ENCODE measurements at regions of chr2 and their contacts with region 1.

Region 1: GRCh38 chr2:113922784-113923183 is 32.9 kb downstream of the ACTR3 start:
- DNase-seq: no peak
- ATAC-seq: no peak
- H3K4me3 ChIP-seq: no peak overlapping the region
- H3K4me3 Mint-ChIP-seq: no peak overlapping the region
- H3K27ac ChIP-seq: no peak overlapping the region
- H3K27ac Mint-ChIP-seq: no peak overlapping the region
- H3K4me1 ChIP-seq: peaks cover 0 to 8% of the 10 kb centered on the region in 2 donors
- H3K4me1 Mint-ChIP-seq: peaks cover 17 to 36% (median 29%) of the 10 kb centered on the region in 7 donors
- H3K27me3 ChIP-seq: no peaks in the 10 kb centered on the region
- H3K27me3 Mint-ChIP-seq: no peaks in the 10 kb centered on the region

Region 2: GRCh38 chr2:113876503-113877387 is 46.0 kb before region 1 on chr2:
- CTCF ChIA-PET with region 1: no interaction called
- POLR2A ChIA-PET with region 1: interaction called, 3 read pairs
- intact Hi-C with region 1: loop called in 1 of 2 experiments (anchors 2 kb)
- DNase-seq: peak; percentile 31 to 93 (median 85)
- ATAC-seq: peak; percentile 90
- H3K4me3 ChIP-seq: no peak overlapping the region
- H3K4me3 Mint-ChIP-seq: peak overlapping the region; percentile 55 to 84 (median 72)
- H3K27ac ChIP-seq: peak overlapping the region; percentile 73
- H3K27ac Mint-ChIP-seq: peak overlapping the region; percentile 83 to 96 (median 92)
- H3K4me1 ChIP-seq: peaks cover 4 to 23% of the 10 kb centered on the region in 2 donors
- H3K4me1 Mint-ChIP-seq: peaks cover 38 to 69% (median 64%) of the 10 kb centered on the region in 7 donors
- H3K27me3 ChIP-seq: no peaks in the 10 kb centered on the region
- H3K27me3 Mint-ChIP-seq: no peaks in the 10 kb centered on the region

Region 3: DNA sequence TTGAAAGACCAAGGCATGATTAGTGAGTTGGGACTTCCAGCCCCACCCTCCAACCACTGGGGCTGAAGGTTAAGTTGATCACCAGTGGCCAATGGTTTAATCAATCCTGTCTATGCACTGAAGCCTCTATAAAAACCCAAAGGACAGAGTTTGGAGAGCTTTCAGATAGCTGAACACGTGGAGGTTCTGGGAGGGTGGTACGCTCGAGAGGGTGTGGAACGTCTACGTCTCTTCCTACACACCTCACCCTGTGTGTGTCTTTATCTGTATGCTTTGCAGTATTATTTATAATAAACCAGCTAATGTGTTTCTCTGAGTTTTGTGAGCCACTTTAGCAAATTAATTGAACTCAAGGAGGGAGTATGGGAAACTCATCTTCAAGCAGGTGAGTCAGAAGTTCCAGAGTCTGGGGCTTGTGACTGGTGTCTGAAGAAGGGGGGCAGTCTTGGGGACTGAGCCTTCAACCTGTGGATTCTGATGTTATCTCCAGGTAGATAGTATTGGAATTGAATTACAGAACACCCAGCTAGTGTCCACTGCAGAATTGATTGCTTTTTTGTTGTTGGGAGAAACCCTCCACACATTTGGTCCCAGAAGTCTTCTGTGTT is 12.6 kb before region 1 on chr2:
- CTCF ChIA-PET with region 1: no interaction called
- POLR2A ChIA-PET with region 1: no interaction called
- intact Hi-C with region 1: loop called (anchors 2 kb)
- DNase-seq: peak in 1 of 9 donors; percentile 78
- ATAC-seq: peak; percentile 46
- H3K4me3 ChIP-seq: no peak overlapping the region
- H3K4me3 Mint-ChIP-seq: peak overlapping the region; percentile 3 to 91 (median 65)
- H3K27ac ChIP-seq: peak overlapping the region; percentile 36
- H3K27ac Mint-ChIP-seq: peak overlapping the region in 8 of 9 donors; percentile 12 to 90 (median 80)
- H3K4me1 ChIP-seq: peaks cover 35 to 39% of the 10 kb centered on the region in 2 donors
- H3K4me1 Mint-ChIP-seq: peaks cover 40 to 95% (median 82%) of the 10 kb centered on the region in 7 donors
- H3K27me3 ChIP-seq: no peaks in the 10 kb centered on the region
- H3K27me3 Mint-ChIP-seq: no peaks in the 10 kb centered on the region

Region 4: GRCh38 chr2:113940891-113941290 is 18.1 kb after region 1 on chr2:
- CTCF ChIA-PET with region 1: no interaction called
- POLR2A ChIA-PET with region 1: no interaction called
- intact Hi-C with region 1: loop called in 1 of 2 experiments (anchors 2 kb)
- DNase-seq: no peak
- ATAC-seq: no peak
- H3K4me3 ChIP-seq: no peak overlapping the region
- H3K4me3 Mint-ChIP-seq: no peak overlapping the region
- H3K27ac ChIP-seq: no peak overlapping the region
- H3K27ac Mint-ChIP-seq: peak overlapping the region in 1 of 9 donors; percentile 16
- H3K4me1 ChIP-seq: no peaks in the 10 kb centered on the region
- H3K4me1 Mint-ChIP-seq: peaks cover 0 to 22% (median 10%) of the 10 kb centered on the region in 7 donors
- H3K27me3 ChIP-seq: no peaks in the 10 kb centered on the region
- H3K27me3 Mint-ChIP-seq: no peaks in the 10 kb centered on the region

Region 5: GRCh38 chr2:113959202-113959601 is 36.4 kb after region 1 on chr2:
- CTCF ChIA-PET with region 1: no interaction called
- POLR2A ChIA-PET with region 1: no interaction called
- intact Hi-C with region 1: loop called in 1 of 2 experiments (anchors 5 kb)
- DNase-seq: no peak
- ATAC-seq: no peak
- H3K4me3 ChIP-seq: no peak overlapping the region
- H3K4me3 Mint-ChIP-seq: no peak overlapping the region
- H3K27ac ChIP-seq: no peak overlapping the region
- H3K27ac Mint-ChIP-seq: peak overlapping the region in 3 of 9 donors; percentile 34 to 81 (median 36)
- H3K4me1 ChIP-seq: no peaks in the 10 kb centered on the region
- H3K4me1 Mint-ChIP-seq: peaks cover 2 to 12% (median 11%) of the 10 kb centered on the region in 7 donors
- H3K27me3 ChIP-seq: no peaks in the 10 kb centered on the region
- H3K27me3 Mint-ChIP-seq: no peaks in the 10 kb centered on the region

Region 6: DNA sequence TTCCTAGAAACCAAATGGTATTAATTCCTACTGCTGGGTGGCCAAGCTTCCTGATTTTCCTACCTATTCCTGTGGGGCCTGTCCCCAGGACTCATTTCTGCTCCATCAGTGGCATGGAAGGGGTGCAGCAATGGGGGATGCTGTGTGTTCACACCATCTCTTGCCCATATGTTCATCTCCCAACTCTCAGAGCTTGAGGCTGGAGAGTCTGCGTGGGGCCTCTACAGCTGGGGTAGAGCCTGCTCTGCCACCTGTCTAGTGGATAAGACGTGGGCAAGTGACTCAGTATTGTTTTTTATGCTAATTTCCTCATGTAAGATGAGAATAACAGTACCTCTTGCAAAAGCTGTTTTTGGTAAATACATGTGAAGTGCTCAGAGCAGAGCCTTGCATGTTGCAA is 116.9 kb after region 1 on chr2:
- CTCF ChIA-PET with region 1: no interaction called
- POLR2A ChIA-PET with region 1: no interaction called
- intact Hi-C with region 1: no loop called
- DNase-seq: no peak
- ATAC-seq: no peak
- H3K4me3 ChIP-seq: no peak overlapping the region
- H3K4me3 Mint-ChIP-seq: no peak overlapping the region
- H3K27ac ChIP-seq: no peak overlapping the region
- H3K27ac Mint-ChIP-seq: no peak overlapping the region
- H3K4me1 ChIP-seq: no peaks in the 10 kb centered on the region
- H3K4me1 Mint-ChIP-seq: no peaks in the 10 kb centered on the region
- H3K27me3 ChIP-seq: no peaks in the 10 kb centered on the region
- H3K27me3 Mint-ChIP-seq: peaks cover 3 to 24% (median 15%) of the 10 kb centered on the region in 5 donors